Transverse colon (tissue), 4 donors: ENCODE measurements at regions of chr18 and their contacts with region 1.

Region 1: DNA sequence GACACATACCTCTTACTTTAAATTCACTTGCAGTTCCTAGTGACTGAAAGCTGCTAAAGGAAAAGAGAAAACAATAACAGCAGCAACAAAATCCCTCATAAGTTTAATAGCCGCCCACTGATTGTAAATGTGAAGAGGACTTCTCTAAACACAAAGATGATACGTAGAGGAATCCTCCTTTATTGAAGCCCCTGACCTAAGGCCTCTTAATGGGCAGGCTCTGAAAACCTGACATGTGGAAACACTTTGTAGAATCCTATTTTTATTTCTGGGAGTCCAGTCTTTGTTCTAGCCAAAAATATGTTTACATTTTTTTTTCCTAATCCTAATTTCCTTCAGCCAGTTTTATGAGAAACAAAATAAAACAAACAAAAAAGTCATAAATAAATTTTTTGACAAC is 1277.7 kb upstream of the CELF4 start:
- DNase-seq: no peak
- H3K4me3 ChIP-seq: no peak overlapping the region
- H3K27ac ChIP-seq: no peak overlapping the region
- H3K4me1 ChIP-seq: no peaks in the 10 kb centered on the region
- H3K27me3 ChIP-seq: no peaks in the 10 kb centered on the region
- CTCF ChIP-seq: no peak
- EP300 ChIP-seq: no peak
- POLR2A ChIP-seq: no peak

Region 2: DNA sequence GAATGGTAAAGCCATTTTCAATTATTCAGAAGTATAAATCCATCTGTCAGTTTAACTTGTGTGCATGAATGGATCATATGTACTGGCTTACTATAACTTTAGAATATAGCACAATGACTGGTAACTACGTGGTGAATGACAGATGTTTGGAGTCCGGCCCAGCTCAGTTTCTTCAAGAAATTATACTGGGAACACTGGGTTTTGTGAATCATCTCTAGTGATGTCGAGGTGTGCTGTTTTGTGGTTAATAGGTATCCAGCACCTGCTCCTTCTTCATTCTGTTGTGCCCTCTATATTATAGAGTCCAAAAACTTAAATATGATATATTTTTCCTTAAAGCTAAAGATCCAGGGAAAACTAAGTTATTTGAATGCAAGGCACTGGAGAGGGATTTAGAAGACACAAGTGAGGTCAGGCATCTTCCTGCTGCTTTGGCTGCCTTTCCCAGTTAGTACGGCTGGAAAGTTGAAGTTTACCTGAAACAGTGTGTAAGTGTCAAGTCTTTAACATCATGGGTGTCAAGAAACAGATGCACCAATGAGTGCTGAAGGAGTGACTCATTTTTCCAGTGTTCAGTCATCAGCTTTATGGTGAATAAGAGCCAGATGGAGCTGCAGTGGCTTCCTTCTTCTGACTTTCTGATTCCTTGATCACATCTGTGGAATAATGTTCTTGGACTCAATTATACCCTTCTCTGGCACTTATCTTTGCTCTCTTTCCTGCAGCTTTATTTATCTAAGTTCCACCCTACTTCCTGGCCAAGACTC is 198.2 kb before region 1 on chr18:
- in situ Hi-C with region 1: no loop called
- intact Hi-C with region 1: loop called (anchors 5 kb)
- DNase-seq: no peak
- H3K4me3 ChIP-seq: no peak overlapping the region
- H3K27ac ChIP-seq: no peak overlapping the region
- H3K4me1 ChIP-seq: no peaks in the 10 kb centered on the region
- H3K27me3 ChIP-seq: no peaks in the 10 kb centered on the region
- CTCF ChIP-seq: no peak
- EP300 ChIP-seq: no peak
- POLR2A ChIP-seq: no peak

Region 3: DNA sequence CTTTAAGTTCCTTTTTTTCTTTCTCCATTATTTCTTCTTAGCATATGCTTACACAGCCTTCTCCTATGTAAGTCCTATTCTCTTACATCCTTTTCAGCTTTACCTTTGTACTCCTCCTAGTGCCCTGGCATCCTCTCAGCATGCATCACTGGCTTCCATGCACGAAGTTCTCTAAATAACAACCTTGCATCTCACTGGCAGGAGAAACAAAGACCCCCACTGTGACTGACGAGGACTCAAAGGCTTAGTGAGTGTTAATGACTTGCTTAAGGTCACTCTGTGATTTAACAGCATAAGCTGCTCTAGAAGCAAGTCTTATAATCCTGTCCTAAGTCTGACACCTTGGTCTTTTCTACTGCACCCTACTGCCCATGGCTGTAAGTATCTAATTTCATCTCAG is 41.7 kb before region 1 on chr18:
- in situ Hi-C with region 1: no loop called
- intact Hi-C with region 1: no loop called
- DNase-seq: no peak
- H3K4me3 ChIP-seq: no peak overlapping the region
- H3K27ac ChIP-seq: no peak overlapping the region
- H3K4me1 ChIP-seq: no peaks in the 10 kb centered on the region
- H3K27me3 ChIP-seq: no peaks in the 10 kb centered on the region
- CTCF ChIP-seq: no peak
- EP300 ChIP-seq: no peak
- POLR2A ChIP-seq: no peak

Region 4: DNA sequence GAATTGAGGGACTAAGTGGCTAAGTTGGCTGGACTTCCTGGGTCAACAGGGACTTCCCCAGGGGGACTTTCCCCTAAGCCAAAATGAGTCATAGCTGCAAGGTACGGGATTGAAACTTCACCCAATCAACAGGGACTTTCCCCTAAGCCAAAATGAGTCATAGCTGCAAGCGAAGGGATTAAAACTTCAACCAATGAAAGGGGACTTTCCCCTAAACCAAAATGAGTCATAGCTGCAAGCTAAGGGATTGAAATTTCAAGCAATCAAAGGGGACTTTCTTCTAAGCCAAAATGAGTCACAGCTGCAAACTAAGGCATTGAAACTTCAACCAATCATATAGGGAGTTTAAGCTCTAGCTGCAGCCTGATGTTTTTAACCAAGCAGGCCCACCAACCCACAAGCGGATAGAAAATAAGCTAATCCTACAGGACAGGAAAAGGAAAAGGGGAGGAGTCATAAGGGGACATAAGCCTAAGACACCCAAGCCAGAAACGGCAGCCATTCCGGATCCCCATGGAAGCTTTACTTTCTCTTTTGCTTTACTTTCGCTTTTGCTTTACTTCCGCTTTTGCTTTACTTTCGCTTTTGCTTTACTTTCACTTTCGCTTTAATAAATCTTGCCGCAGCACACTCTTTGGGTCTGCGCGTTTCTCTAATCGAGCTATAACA is 97.7 kb after region 1 on chr18:
- in situ Hi-C with region 1: loop called in 1 of 4 experiments (anchors 25 kb)
- intact Hi-C with region 1: no loop called
- DNase-seq: no peak
- H3K4me3 ChIP-seq: no peak overlapping the region
- H3K27ac ChIP-seq: no peak overlapping the region
- H3K4me1 ChIP-seq: no peaks in the 10 kb centered on the region
- H3K27me3 ChIP-seq: no peaks in the 10 kb centered on the region
- CTCF ChIP-seq: no peak
- EP300 ChIP-seq: no peak
- POLR2A ChIP-seq: no peak

Region 5: GRCh38 chr18:40413160-40413559 is 1569.9 kb after region 1 on chr18:
- in situ Hi-C with region 1: no loop called
- intact Hi-C with region 1: no loop called
- DNase-seq: peak; percentile 19
- H3K4me3 ChIP-seq: no peak overlapping the region
- H3K27ac ChIP-seq: no peak overlapping the region
- H3K4me1 ChIP-seq: no peaks in the 10 kb centered on the region
- H3K27me3 ChIP-seq: no peaks in the 10 kb centered on the region
- CTCF ChIP-seq: peak in 4 of 5 experiments; percentile 32 to 54 (median 46)
- EP300 ChIP-seq: no peak
- POLR2A ChIP-seq: no peak